ENCODE measurements at regions of chr5 and their contacts with region 1.

Region 1: GRCh38 chr5:10441083-10441991 is at the start of gene ROPN1L:
- DNase-seq: peak; percentile 50 to 88 (median 75)
- ATAC-seq: peak; percentile 94
- H3K4me3 ChIP-seq: peak within 1 kb of the TSS; percentile 76 to 88
- H3K4me3 Mint-ChIP-seq: peak within 1 kb of the TSS; percentile 84
- H3K27ac ChIP-seq: peak within 1 kb of the TSS; percentile 41 to 56
- H3K27ac Mint-ChIP-seq: peak within 1 kb of the TSS; percentile 38
- H3K4me1 ChIP-seq: peaks cover 41% of the 10 kb centered on the region
- H3K4me1 Mint-ChIP-seq: peaks cover 41% of the 10 kb centered on the region
- H3K27me3 ChIP-seq: no peaks in the 10 kb centered on the region
- H3K27me3 Mint-ChIP-seq: no peaks in the 10 kb centered on the region
- CTCF ChIP-seq: no peak
- total RNA-seq, gene ROPN1L: not detected

Region 2: DNA sequence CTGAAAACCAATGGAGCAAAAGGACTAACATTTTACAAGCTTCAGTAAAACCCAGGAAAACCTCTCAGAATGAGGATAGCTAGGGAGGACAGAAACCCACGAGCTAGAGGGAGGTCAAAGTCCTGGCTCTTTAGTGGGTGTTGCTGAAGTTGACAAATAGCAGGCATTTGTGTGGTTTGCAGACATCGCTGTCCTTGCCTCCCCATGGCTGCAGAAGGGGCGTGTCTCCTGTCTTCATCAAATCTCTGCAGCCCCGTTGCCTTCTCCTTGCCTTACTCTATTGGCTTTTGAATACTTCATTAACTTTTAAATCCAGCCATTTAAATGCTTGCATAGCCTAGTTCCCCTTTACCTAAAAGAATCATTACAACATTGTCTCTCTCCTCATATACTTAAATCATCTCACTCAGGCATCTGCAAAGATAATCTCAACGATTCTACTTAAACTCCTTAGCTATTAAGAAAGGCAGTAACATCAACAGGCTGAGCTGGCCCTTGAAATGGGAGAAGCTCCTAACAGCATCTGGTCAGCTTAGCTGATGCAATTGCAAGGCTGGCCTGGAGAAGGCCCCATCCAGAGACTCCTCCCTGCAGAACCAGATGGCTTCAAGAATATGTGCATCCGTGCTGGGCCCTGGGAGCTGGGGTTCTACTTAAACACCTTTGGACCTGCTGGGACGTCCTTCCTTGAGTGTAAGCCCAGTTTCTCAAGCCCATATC is 658.3 kb before region 1 on chr5:
- CTCF ChIA-PET with region 1: no interaction called
- POLR2A ChIA-PET with region 1: no interaction called
- intact Hi-C with region 1: no loop called
- DNase-seq: no peak
- ATAC-seq: no peak
- H3K4me3 ChIP-seq: no peak overlapping the region
- H3K4me3 Mint-ChIP-seq: no peak overlapping the region
- H3K27ac ChIP-seq: no peak overlapping the region
- H3K27ac Mint-ChIP-seq: no peak overlapping the region
- H3K4me1 ChIP-seq: no peaks in the 10 kb centered on the region
- H3K4me1 Mint-ChIP-seq: no peaks in the 10 kb centered on the region
- H3K27me3 ChIP-seq: no peaks in the 10 kb centered on the region
- H3K27me3 Mint-ChIP-seq: peaks cover 1% of the 10 kb centered on the region
- CTCF ChIP-seq: no peak

Region 3: DNA sequence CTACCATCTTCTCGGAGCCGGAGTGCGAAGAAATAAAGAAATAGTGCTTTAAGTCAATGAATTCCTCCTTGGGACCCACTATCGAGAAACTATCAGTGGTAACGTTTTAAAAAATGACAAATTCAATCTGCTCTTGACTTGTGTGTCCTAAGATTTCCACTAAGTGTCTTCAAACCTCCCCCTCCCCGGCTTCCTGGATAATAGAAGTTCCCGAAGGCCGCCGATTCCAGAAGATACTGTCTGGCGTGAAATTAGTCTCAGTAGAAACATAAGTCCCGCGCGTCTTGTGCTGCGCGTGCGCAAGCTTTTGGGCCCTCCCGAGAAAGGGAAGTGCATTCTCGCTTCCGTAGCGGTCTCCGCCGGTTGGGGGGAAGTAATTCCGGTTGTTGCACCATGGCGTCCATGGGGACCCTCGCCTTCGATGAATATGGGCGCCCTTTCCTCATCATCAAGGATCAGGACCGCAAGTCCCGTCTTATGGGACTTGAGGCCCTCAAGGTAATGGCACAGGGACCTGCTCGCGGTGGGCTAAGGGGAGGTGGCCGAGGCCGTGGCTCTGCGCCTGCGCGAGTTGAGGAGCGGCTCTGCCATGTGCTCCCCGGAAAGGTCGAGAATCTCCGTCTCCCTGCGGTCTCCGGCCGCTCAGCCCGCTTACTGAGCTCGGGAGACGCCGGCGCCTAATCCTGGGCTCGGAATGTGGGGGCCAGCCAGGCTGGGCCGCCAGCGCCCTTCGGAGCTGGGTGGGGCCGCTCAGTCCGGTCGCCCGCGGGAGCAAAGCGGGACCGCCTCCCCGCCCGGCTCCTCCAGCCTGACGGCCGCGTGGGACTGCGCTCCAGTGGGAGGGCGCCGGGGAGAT is 191.2 kb before region 1 on chr5 and contains the start of gene CCT5:
- CTCF ChIA-PET with region 1: no interaction called
- POLR2A ChIA-PET with region 1: no interaction called
- intact Hi-C with region 1: loop called in 1 of 2 experiments (anchors 1 kb)
- DNase-seq: peak; percentile 78 to 99 (median 89)
- ATAC-seq: peak; percentile 81
- H3K4me3 ChIP-seq: peak within 1 kb of the TSS; percentile 85 to 99
- H3K4me3 Mint-ChIP-seq: peak within 1 kb of the TSS; percentile 94
- H3K27ac ChIP-seq: peak within 1 kb of the TSS; percentile 91 to 97
- H3K27ac Mint-ChIP-seq: peak within 1 kb of the TSS; percentile 99
- H3K4me1 ChIP-seq: peaks cover 34% of the 10 kb centered on the region
- H3K4me1 Mint-ChIP-seq: peaks cover 49% of the 10 kb centered on the region
- H3K27me3 ChIP-seq: no peaks in the 10 kb centered on the region
- H3K27me3 Mint-ChIP-seq: no peaks in the 10 kb centered on the region
- CTCF ChIP-seq: no peak
- total RNA-seq, gene CCT5: 38.1 to 41.0 TPM

Region 4: DNA sequence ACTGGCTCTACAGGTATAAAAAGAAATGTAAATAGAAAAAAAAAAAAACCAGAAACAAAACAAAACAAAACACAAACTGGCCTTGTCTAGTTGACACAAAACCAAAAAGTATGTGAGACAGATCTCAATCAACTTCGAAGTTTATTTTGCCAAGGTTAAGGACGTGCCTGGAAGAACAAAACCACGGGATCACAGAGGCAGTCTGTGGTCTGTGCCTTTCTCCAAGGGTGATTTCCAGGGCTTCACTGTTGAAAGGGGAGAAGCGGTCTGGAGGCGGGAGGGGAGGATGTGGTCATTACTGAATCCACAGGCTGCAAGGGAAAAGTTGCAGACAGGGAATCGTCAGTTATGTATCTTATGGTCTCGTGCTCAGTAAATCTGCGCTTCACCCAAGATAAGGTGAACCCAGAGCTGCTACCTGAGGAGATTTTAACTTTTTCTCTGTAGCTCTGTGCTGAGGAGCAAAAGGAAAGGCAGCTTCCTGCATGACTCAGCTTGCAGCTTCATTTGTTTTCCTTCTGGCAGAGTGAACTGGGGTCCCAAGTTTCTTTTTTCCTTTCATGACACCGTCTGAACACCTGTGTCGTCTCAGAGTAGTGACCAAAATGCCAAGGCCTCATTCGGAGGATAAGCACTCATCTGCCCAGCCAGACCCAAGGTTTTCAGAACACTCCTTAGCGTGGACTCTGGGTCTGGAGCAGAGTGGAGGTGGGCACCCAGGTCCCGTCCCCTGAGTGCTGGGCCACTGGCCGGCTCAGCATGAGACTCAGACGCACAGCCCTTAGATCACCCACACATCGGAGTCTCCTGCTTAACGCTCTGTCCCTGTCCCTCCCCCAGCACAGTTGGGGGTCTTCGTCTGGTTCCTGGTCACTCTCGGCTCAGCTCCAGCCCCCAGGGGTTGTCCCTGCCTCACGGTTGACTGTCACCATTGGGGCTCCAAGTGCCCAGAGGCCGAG is 26.2 kb after region 1 on chr5:
- CTCF ChIA-PET with region 1: no interaction called
- POLR2A ChIA-PET with region 1: no interaction called
- intact Hi-C with region 1: no loop called
- DNase-seq: no peak
- ATAC-seq: no peak
- H3K4me3 ChIP-seq: no peak overlapping the region
- H3K4me3 Mint-ChIP-seq: no peak overlapping the region
- H3K27ac ChIP-seq: no peak overlapping the region
- H3K27ac Mint-ChIP-seq: no peak overlapping the region
- H3K4me1 ChIP-seq: no peaks in the 10 kb centered on the region
- H3K4me1 Mint-ChIP-seq: peaks cover 6% of the 10 kb centered on the region
- H3K27me3 ChIP-seq: no peaks in the 10 kb centered on the region
- H3K27me3 Mint-ChIP-seq: no peaks in the 10 kb centered on the region
- CTCF ChIP-seq: no peak

Region 5: GRCh38 chr5:10489810-10490426 is 48.6 kb after region 1 on chr5:
- CTCF ChIA-PET with region 1: no interaction called
- POLR2A ChIA-PET with region 1: no interaction called
- intact Hi-C with region 1: no loop called
- DNase-seq: peak in 5 of 9 experiments; percentile 8 to 49 (median 21)
- ATAC-seq: peak; percentile 46
- H3K4me3 ChIP-seq: no peak overlapping the region
- H3K4me3 Mint-ChIP-seq: no peak overlapping the region
- H3K27ac ChIP-seq: peak overlapping the region in 1 of 2 experiments; percentile 46
- H3K27ac Mint-ChIP-seq: no peak overlapping the region
- H3K4me1 ChIP-seq: peaks cover 7% of the 10 kb centered on the region
- H3K4me1 Mint-ChIP-seq: peaks cover 12% of the 10 kb centered on the region
- H3K27me3 ChIP-seq: peaks cover 0 to 2% of the 10 kb centered on the region in 2 experiments
- H3K27me3 Mint-ChIP-seq: no peaks in the 10 kb centered on the region
- CTCF ChIP-seq: no peak

Region 6: GRCh38 chr5:10563945-10564837 is 122.9 kb after region 1 on chr5 and contains the start of gene ANKRD33B:
- CTCF ChIA-PET with region 1: no interaction called
- POLR2A ChIA-PET with region 1: no interaction called
- intact Hi-C with region 1: loop called in 1 of 2 experiments (anchors 2 kb)
- DNase-seq: peak; percentile 52 to 88 (median 74)
- ATAC-seq: peak; percentile 89
- H3K4me3 ChIP-seq: peak within 1 kb of the TSS; percentile 57 to 70
- H3K4me3 Mint-ChIP-seq: peak within 1 kb of the TSS; percentile 83
- H3K27ac ChIP-seq: no peak within 1 kb of the TSS
- H3K27ac Mint-ChIP-seq: no peak within 1 kb of the TSS
- H3K4me1 ChIP-seq: peaks cover 16% of the 10 kb centered on the region
- H3K4me1 Mint-ChIP-seq: peaks cover 14% of the 10 kb centered on the region
- H3K27me3 ChIP-seq: peaks cover 0 to 12% of the 10 kb centered on the region in 2 experiments
- H3K27me3 Mint-ChIP-seq: peaks cover 7% of the 10 kb centered on the region
- CTCF ChIP-seq: no peak
- total RNA-seq, gene ANKRD33B: 1.3 to 1.4 TPM